Lower lobe of right lung (tissue), 2 donors: ENCODE measurements at regions of chr4 and their contacts with region 1.

Region 1: DNA sequence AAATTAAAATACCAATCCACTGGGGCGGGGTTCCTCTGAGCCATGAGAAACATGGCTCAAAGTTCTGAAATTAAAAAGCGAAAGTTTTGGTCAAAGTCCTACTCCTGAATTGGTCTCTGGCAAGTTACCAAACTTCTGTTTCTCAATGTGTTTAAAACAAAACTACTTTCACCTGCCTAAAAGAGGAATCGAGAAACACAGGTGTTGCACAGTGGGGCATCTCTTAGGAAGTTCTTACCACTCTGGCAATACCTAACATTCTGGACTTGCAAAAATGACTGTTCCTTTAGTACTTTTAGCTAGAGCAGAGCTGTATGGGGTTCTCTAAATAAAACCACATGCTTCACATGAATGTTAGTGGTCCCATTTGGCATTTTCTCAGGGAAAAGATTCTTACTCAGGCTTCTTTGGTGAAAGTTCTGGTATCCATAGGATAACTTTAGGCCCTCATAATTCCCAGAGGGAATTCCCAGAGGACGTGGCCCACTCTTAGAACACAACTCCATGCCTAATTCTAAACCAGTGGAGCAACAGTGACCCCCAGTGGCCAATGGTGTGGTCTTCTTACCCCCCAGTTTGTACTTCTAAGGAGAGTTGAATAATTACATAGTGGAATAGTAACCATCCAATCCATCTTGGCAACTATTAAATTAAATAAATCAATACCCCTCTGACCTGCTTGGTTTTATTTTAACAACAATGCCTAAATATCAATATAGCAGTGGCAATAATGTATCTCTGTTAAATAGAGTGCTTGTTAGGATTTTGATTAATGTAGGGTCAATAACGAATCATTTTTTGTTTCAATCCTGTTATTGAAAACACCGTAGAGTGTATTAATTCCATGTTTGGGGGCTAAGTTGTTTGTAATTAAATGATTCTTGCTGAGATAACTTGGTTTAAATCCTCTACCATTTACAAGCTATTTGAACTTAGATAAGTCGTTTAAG is 21.9 kb downstream of the BMP3 start:
- DNase-seq: peak; percentile 63
- ATAC-seq: peak; percentile 72 to 85
- H3K4me3 ChIP-seq: no peak overlapping the region
- H3K27ac ChIP-seq: no peak overlapping the region
- H3K4me1 ChIP-seq: no peaks in the 10 kb centered on the region
- H3K27me3 ChIP-seq: no peaks in the 10 kb centered on the region
- CTCF ChIP-seq: peak; percentile 58

Region 2: GRCh38 chr4:80365928-80366327 is 686.5 kb before region 1 on chr4:
- intact Hi-C with region 1: loop called (anchors 10 kb)
- DNase-seq: peak; percentile 52
- ATAC-seq: peak; percentile 86
- H3K4me3 ChIP-seq: no peak overlapping the region
- H3K27ac ChIP-seq: no peak overlapping the region
- H3K4me1 ChIP-seq: no peaks in the 10 kb centered on the region
- H3K27me3 ChIP-seq: no peaks in the 10 kb centered on the region
- CTCF ChIP-seq: peak; percentile 54

Region 3: DNA sequence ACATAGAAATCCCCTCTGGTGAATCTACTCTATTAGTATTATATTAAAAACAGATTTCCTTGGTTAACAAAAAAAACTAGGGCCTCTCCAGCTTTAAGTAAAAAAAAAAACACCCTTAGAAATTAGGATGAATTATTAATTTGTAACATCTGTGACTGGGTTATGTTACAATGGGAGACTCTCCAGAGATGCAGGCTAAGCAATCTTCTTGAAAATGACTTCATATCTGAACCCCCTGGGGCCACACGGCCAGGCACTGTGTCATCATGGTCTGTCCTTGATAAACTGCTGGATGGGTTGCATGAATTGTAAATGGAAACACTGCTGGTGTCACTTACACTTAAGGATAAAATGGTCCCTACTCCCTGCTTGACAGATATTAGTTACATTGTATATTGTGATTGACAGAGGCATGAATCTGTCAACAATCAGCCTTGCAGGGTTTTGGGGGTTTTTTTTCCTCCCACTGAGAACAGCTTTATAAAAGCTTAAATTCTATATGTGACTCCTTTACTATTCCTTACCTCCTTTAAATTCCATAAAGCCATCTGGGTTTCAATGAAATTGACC is 113.6 kb after region 1 on chr4:
- intact Hi-C with region 1: no loop called
- DNase-seq: no peak
- ATAC-seq: no peak
- H3K4me3 ChIP-seq: no peak overlapping the region
- H3K27ac ChIP-seq: no peak overlapping the region
- H3K4me1 ChIP-seq: no peaks in the 10 kb centered on the region
- H3K27me3 ChIP-seq: no peaks in the 10 kb centered on the region
- CTCF ChIP-seq: no peak

Region 4: GRCh38 chr4:81225252-81225651 is 172.9 kb after region 1 on chr4:
- intact Hi-C with region 1: no loop called
- DNase-seq: no peak
- ATAC-seq: no peak
- H3K4me3 ChIP-seq: no peak overlapping the region
- H3K27ac ChIP-seq: no peak overlapping the region
- H3K4me1 ChIP-seq: no peaks in the 10 kb centered on the region
- H3K27me3 ChIP-seq: no peaks in the 10 kb centered on the region
- CTCF ChIP-seq: no peak